Right ventricle myocardium inferior (tissue), 1 donor: ENCODE measurements at regions of chr11 and their contacts with region 1.

Region 1: DNA sequence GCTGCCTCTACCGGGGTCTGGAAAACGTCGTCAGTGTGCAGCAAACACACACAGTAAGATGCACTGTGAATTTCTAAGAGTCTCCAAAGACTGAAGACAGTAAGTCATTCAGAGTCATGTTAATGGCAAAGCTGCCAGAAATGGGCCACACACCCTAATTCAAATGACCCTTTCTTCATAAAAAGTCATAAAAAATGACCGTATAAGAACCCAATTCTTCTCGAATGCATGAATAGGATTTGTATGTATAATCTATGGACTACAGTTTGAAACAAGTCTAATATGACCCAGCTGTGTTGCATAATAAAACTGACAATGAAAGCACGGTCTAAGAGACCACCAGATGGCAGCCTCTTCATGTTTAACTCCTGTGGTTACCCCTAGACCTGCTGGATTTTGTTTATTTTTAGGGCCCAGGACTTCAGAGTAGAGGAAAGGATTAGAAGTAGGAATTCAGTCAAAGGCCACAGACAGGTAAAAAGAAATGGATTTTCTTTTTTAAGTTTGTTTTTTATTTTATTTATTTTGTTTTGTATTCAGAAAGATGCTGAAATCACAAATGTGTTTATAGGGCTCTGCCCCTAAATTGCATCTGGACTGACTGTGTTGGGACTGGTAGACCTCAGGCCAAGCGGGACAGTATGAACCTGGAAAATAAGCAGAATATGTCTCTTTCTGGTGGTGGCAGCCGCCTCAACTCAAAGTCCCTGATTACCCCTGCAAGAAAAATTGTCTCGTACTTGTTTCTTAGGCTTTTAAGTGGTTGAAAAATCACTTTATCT is 32.1 kb upstream of the SLC5A12 start:
- DNase-seq: no peak
- ATAC-seq: peak; percentile 90

Region 2: DNA sequence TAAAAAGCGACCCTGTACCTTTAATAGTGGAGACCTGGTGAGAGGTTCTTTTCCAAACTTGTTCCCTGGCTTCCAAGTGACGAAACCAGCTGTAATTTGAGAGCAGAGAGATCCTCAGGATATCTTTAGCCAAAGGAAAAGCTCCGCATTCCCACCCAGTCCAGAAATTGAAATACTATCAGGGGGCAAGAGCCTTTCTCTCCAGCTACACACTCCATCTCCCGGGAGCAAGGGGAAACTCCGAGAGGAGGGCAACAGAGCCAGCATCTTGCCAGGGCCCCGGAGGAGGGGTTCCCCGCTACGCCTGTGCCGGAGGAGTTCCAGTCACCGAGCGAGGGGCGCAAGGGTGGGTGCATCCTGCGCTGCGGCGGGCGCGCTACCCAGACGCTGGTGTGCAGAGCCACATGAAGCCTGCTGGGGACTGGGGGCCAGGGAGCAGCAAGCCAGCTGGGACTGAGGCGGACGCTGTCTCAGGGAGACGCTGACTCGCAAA is 240.1 kb after region 1 on chr11 and contains the start of gene FIBIN:
- intact Hi-C with region 1: loop called (anchors 10 kb)
- DNase-seq: peak; percentile 59
- ATAC-seq: peak; percentile 65
- total RNA-seq, gene FIBIN: 8.3 TPM

Region 3: DNA sequence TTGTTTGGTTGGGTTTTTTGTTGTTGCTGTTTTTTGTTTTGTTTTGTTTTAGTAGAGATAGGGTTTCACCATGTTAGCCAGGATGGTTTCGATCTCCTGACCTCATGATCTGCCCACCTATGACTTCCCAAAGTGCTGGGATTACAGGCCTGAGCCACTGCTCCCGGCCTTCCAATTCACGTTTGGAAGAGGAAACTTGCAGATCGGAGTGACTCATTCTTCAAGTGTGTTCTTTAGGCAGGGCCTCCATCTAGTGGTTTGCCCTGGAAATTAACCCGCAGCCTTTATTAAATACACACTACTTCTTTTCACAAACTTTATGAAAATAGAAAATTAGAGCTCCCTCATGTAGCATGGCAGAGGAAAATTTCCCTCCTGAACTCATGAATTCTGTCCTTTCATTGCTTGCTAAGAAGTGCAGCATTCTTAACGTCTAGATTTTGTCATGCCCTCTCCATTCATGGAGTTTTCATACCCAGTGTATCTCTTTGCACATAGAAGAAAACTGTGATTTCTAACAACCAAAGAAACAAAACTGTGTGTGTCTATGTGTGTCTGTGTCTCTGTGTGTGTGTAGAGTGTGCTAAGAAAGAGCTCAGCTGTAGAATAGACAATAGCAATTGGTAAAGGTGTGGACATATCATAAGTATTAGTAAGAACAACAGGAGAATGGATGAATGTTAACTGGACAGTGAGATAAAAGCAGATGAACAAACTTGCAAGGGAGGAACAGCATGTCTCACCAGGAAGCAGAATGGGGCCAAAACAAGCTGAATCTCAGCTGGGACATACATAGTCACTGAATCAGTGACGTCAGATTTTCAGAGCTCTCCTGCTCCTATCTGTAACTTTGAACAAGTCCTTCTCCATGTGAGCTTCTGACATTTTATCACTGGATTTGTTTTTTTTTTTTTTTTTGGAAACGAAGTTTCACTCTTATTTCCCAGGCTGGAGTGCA is 405.1 kb after region 1 on chr11:
- intact Hi-C with region 1: loop called (anchors 1 kb)
- DNase-seq: no peak
- ATAC-seq: peak; percentile 80